ENCODE measurements at regions of chr2 and their contacts with region 1.

Region 1: DNA sequence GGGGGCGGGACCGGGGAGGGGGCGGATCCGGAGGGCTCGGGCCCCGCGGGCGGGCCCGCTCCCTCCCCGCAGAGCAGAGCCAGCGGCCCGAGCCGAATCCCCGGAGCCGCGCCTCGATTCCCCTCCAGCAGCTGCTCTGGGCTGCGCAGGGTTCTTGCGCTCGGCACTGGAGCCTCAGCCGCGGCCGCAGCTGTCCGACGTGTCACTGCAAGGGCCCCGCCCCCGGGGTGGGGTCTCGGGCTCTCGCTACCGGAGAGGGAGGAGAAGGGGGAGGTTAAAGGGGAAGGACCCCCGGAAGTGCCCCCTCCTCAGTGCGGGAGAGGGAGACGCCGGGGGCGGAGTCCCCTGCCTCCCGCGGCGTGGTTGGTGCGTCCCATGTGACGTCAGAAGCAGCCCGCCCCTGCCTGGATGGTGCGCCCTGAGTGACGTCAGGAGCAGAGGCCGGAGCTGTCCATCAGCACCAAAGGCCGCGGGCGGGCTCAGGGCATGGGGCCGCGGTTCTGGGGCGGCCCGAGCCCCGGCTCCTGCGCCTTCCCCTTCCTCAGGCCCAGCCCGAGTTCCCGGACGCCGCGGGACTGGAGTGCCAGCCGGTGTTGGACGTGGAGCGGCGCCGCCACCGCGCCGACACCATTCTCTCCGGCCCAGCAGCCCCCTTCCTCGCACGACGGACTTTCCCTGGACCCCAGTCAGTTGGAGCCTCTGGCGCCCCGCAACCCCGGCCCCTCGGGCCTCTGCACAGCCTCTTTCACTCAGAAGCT is at the starts of genes CHPF and TMEM198:
- DNase-seq: peak; percentile 79 to 94 (median 88)
- ATAC-seq: peak; percentile 86
- H3K4me3 ChIP-seq: peak within 1 kb of the TSS; percentile 51
- H3K4me3 Mint-ChIP-seq: peak within 1 kb of the TSS; percentile 83 to 95 (median 90)
- H3K27ac ChIP-seq: peak within 1 kb of the TSS; percentile 78
- H3K27ac Mint-ChIP-seq: peak within 1 kb of the TSS; percentile 71 to 90 (median 78)
- H3K4me1 ChIP-seq: peaks cover 10 to 12% of the 10 kb centered on the region in 2 donors
- H3K4me1 Mint-ChIP-seq: peaks cover 18 to 30% (median 25%) of the 10 kb centered on the region in 7 donors
- H3K27me3 ChIP-seq: no peaks in the 10 kb centered on the region
- H3K27me3 Mint-ChIP-seq: peaks cover 0 to 18% (median 11%) of the 10 kb centered on the region in 5 donors
- total RNA-seq, gene CHPF: 4.3 to 15.3 (median 5.7) TPM
- total RNA-seq, gene TMEM198: 0.45 to 0.69 (median 0.50) TPM in 4 of 5 experiments, not detected in the other

Region 2: GRCh38 chr2:217610401-217611075 is 1933.2 kb before region 1 on chr2:
- CTCF ChIA-PET with region 1: no interaction called
- POLR2A ChIA-PET with region 1: no interaction called
- intact Hi-C with region 1: loop called in 1 of 2 experiments (anchors 5 kb)
- DNase-seq: peak; percentile 11 to 75 (median 57)
- ATAC-seq: peak; percentile 75
- H3K4me3 ChIP-seq: peak overlapping the region; percentile 33
- H3K4me3 Mint-ChIP-seq: peak overlapping the region; percentile 33 to 78 (median 66)
- H3K27ac ChIP-seq: peak overlapping the region; percentile 68
- H3K27ac Mint-ChIP-seq: peak overlapping the region; percentile 76 to 98 (median 92)
- H3K4me1 ChIP-seq: peaks cover 8 to 35% of the 10 kb centered on the region in 2 donors
- H3K4me1 Mint-ChIP-seq: peaks cover 13 to 75% (median 63%) of the 10 kb centered on the region in 7 donors
- H3K27me3 ChIP-seq: no peaks in the 10 kb centered on the region
- H3K27me3 Mint-ChIP-seq: no peaks in the 10 kb centered on the region

Region 3: GRCh38 chr2:218568190-218569037 is 975.4 kb before region 1 on chr2 and contains the starts of genes CNOT9 and USP37:
- CTCF ChIA-PET with region 1: no interaction called
- POLR2A ChIA-PET with region 1: no interaction called
- intact Hi-C with region 1: loop called in 1 of 2 experiments (anchors 5 kb)
- DNase-seq: peak; percentile 99 to 100 (median 100)
- ATAC-seq: peak; percentile 95
- H3K4me3 ChIP-seq: peak within 1 kb of the TSS; percentile 78
- H3K4me3 Mint-ChIP-seq: peak within 1 kb of the TSS; percentile 90 to 100 (median 98)
- H3K27ac ChIP-seq: peak within 1 kb of the TSS; percentile 96
- H3K27ac Mint-ChIP-seq: peak within 1 kb of the TSS; percentile 97 to 100 (median 99)
- H3K4me1 ChIP-seq: peaks cover 22 to 31% of the 10 kb centered on the region in 2 donors
- H3K4me1 Mint-ChIP-seq: peaks cover 45 to 73% (median 64%) of the 10 kb centered on the region in 7 donors
- H3K27me3 ChIP-seq: no peaks in the 10 kb centered on the region
- H3K27me3 Mint-ChIP-seq: no peaks in the 10 kb centered on the region
- total RNA-seq, gene CNOT9: 44.7 to 99.6 (median 53.8) TPM
- total RNA-seq, gene USP37: 16.6 to 36.3 (median 28.1) TPM

Region 4: DNA sequence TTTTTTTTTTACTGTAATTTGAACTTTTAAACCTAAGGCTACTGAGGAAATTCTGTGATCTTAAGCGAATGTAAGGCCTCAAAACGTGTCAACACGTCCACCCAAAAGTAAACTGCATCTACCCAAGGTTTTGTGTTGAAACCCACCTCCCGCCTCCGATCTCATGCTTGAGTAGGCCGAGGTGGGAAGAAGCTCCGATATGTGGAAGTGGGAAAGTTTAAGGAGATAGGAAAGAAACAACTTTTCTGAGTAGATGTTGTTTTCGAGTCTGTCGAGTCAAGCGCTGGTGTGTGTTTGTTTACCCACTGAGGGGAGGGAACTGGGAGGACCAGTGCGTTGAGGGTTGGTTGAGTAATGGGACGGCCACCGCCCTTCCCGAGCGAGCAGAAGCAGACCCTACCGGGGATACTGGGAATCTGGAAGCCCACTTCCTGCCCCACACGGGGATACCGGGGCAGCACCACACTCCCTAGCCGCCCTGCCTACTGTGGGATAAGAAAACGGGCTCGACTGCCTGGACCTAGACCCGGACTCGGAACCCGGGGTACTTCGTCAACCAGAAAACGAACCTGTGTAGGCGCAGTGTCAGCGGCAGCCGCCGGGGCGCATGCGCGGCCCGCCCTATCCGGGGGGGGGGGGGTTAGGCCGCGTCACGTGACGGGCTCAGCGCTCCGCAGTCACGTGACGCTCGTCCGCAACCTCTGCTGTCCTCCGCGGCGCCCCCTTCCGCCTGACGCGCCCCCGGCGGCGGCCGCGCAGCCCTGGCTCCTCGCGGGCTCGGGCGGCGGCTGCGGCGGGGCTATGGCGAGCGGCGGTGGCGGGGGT is 366.0 kb before region 1 on chr2 and contains the start of gene RETREG2:
- CTCF ChIA-PET with region 1: interaction called, 3 read pairs
- POLR2A ChIA-PET with region 1: no interaction called
- intact Hi-C with region 1: loop called (anchors 2 kb)
- DNase-seq: peak; percentile 79 to 86 (median 83)
- ATAC-seq: peak; percentile 73
- H3K4me3 ChIP-seq: peak within 1 kb of the TSS; percentile 97
- H3K4me3 Mint-ChIP-seq: peak within 1 kb of the TSS; percentile 90 to 99 (median 96)
- H3K27ac ChIP-seq: peak within 1 kb of the TSS; percentile 96
- H3K27ac Mint-ChIP-seq: peak within 1 kb of the TSS; percentile 97 to 100 (median 99)
- H3K4me1 ChIP-seq: peaks cover 44 to 47% of the 10 kb centered on the region in 2 donors
- H3K4me1 Mint-ChIP-seq: peaks cover 48 to 80% (median 69%) of the 10 kb centered on the region in 7 donors
- H3K27me3 ChIP-seq: no peaks in the 10 kb centered on the region
- H3K27me3 Mint-ChIP-seq: no peaks in the 10 kb centered on the region
- total RNA-seq, gene RETREG2: 70.2 to 124 (median 90.9) TPM

Region 5: GRCh38 chr2:219294356-219295351 is 249.1 kb before region 1 on chr2:
- CTCF ChIA-PET with region 1: no interaction called
- POLR2A ChIA-PET with region 1: no interaction called
- intact Hi-C with region 1: loop called in 1 of 2 experiments (anchors 5 kb)
- DNase-seq: peak; percentile 80 to 93 (median 90)
- ATAC-seq: peak; percentile 99
- H3K4me3 ChIP-seq: peak overlapping the region; percentile 47
- H3K4me3 Mint-ChIP-seq: peak overlapping the region; percentile 68 to 89 (median 82)
- H3K27ac ChIP-seq: peak overlapping the region; percentile 79
- H3K27ac Mint-ChIP-seq: peak overlapping the region; percentile 56 to 88 (median 84)
- H3K4me1 ChIP-seq: peaks cover 2 to 20% of the 10 kb centered on the region in 2 donors
- H3K4me1 Mint-ChIP-seq: peaks cover 11 to 34% (median 27%) of the 10 kb centered on the region in 7 donors
- H3K27me3 ChIP-seq: no peaks in the 10 kb centered on the region
- H3K27me3 Mint-ChIP-seq: peaks cover 0 to 9% (median 0%) of the 10 kb centered on the region in 5 donors

Region 6: DNA sequence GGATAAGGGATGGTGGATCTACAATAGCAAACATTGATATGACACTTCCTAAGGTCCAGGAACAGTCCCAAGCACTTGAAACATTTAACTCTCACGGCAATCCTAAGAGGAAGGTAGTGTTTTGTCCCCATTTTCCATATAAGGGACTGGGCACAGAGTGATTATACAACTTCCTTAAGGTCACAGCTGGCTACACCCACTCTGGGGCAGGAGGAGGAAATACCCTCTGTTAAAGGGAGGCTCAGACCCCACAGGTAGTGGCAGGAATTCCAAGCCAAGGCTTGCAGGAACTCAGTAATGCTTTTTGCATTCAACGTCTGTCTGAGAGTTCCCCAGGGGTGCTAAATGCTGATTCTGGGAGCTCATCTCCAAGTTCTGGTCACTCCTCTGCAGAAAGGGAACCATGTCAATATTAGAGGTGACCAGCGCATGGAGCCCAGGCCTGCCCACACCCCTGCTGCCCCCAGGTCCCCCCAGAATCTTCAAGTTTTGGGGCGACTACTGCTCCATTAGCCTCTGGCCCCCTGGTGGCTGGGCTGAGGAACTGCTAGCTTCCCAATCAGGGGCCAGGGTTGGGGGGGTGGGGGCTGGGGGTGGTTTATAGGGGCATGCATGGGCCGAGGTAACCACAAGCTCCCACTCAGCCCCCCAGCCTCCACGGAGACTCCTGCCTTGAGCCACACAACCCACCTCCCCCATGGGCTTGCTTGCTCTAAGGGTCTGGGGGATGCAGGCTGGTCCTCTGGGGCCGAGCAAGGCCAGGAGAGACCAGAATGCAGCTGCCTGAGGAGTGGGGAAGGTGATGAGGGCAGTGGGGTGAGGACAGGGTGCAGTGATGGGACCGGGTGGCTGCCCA is 16.5 kb after region 1 on chr2:
- CTCF ChIA-PET with region 1: interaction called, 10 read pairs
- POLR2A ChIA-PET with region 1: interaction called, 3 read pairs
- intact Hi-C with region 1: loop called (anchors 1 to 2 kb)
- DNase-seq: peak in 2 of 9 donors; percentile 33 to 41
- ATAC-seq: peak; percentile 67
- H3K4me3 ChIP-seq: no peak overlapping the region
- H3K4me3 Mint-ChIP-seq: no peak overlapping the region
- H3K27ac ChIP-seq: no peak overlapping the region
- H3K27ac Mint-ChIP-seq: no peak overlapping the region
- H3K4me1 ChIP-seq: no peaks in the 10 kb centered on the region
- H3K4me1 Mint-ChIP-seq: no peaks in the 10 kb centered on the region
- H3K27me3 ChIP-seq: no peaks in the 10 kb centered on the region
- H3K27me3 Mint-ChIP-seq: peaks cover 2 to 41% (median 16%) of the 10 kb centered on the region in 5 donors

Region 7: DNA sequence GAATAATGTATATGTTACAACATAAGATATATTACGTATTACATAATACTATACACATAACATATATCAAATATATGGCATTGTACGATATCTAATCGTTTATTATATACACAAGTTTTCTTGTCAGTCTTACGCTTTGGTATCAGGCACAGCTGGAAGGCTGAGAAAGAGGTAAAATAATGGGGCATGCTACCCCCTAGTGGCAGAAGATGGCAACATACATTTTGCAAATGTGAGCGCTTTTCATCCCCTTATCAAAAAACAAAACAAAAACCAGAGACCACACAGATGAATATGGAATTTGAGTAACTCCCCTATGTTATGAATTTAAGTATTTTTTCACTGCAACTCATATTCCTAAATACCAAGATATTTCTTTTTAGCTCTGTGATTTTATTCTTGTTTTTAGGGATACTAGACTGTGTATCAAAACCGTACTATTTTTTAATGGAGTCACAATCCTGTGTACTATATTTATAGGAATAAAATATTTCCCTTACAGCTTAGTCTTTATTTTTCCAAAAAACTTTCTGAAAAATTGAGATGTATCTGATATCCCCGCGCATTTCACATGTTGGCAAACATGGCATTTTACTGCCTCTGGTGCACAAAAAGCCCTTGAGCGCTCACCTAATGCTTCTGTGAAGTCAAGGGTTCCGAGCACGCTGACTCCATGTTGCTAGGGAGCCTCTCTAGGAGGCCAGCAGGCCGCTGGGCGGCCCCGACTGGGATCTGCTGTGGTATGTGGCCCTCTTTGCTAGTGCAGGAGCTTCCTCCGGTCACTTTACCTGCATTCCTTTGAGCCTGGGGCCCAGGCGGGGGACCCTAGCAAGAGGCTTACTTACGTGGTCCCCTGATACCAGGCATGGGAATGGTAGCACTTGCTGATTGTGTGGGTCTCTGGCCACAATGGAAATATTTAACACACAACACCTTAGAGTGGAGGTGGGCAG is 146.2 kb after region 1 on chr2:
- CTCF ChIA-PET with region 1: interaction called, 4 read pairs
- POLR2A ChIA-PET with region 1: no interaction called
- intact Hi-C with region 1: loop called in 1 of 2 experiments (anchors 1 kb)
- DNase-seq: peak in 8 of 9 donors; percentile 11 to 50 (median 38)
- ATAC-seq: peak; percentile 67
- H3K4me3 ChIP-seq: no peak overlapping the region
- H3K4me3 Mint-ChIP-seq: no peak overlapping the region
- H3K27ac ChIP-seq: no peak overlapping the region
- H3K27ac Mint-ChIP-seq: no peak overlapping the region
- H3K4me1 ChIP-seq: no peaks in the 10 kb centered on the region
- H3K4me1 Mint-ChIP-seq: peaks cover 5 to 14% (median 11%) of the 10 kb centered on the region in 7 donors
- H3K27me3 ChIP-seq: no peaks in the 10 kb centered on the region
- H3K27me3 Mint-ChIP-seq: peaks cover 17 to 46% (median 25%) of the 10 kb centered on the region in 5 donors